Transverse colon (tissue), 4 donors: ENCODE measurements at regions of chr3 and their contacts with region 1.

Region 1: GRCh38 chr3:27484015-27484844 is at the start of gene SLC4A7:
- DNase-seq: peak; percentile 99
- H3K4me3 ChIP-seq: peak within 1 kb of the TSS; percentile 54 to 84 (median 76)
- H3K27ac ChIP-seq: peak within 1 kb of the TSS; percentile 91 to 97 (median 94)
- H3K4me1 ChIP-seq: peaks cover 0 to 40% (median 16%) of the 10 kb centered on the region in 4 donors
- H3K27me3 ChIP-seq: no peaks in the 10 kb centered on the region
- CTCF ChIP-seq: no peak
- EP300 ChIP-seq: no peak
- POLR2A ChIP-seq: peak; percentile 90
- total RNA-seq, gene SLC4A7: 22.7 to 45.6 (median 35.4) TPM

Region 2: DNA sequence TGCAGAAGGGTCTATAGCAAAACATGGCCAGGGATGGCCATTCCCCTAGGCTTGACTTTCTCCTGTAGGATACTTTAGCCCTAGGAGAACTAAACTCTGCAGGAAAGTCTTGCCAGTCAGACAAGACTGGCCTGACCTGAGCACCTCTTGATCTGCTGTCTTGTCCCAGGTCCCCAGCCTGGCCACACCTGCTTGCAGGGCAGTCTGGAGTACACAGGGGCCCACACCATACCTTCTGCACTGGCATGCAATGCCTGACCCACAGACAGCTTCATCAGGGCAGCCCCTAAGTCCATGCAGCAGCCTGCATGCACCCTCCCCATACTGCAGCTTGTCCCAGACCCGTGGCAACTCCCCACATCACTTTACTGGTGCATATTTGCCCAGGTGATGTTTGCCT is 657.1 kb before region 1 on chr3:
- in situ Hi-C with region 1: no loop called
- intact Hi-C with region 1: no loop called
- DNase-seq: no peak
- H3K4me3 ChIP-seq: no peak overlapping the region
- H3K27ac ChIP-seq: no peak overlapping the region
- H3K4me1 ChIP-seq: no peaks in the 10 kb centered on the region
- H3K27me3 ChIP-seq: no peaks in the 10 kb centered on the region
- CTCF ChIP-seq: no peak
- EP300 ChIP-seq: no peak
- POLR2A ChIP-seq: no peak

Region 3: GRCh38 chr3:27596334-27596841 is 112.2 kb after region 1 on chr3:
- in situ Hi-C with region 1: no loop called
- intact Hi-C with region 1: no loop called
- DNase-seq: no peak
- H3K4me3 ChIP-seq: no peak overlapping the region
- H3K27ac ChIP-seq: peak overlapping the region in 1 of 4 donors; percentile 21
- H3K4me1 ChIP-seq: peaks cover 0 to 21% (median 5%) of the 10 kb centered on the region in 4 donors
- H3K27me3 ChIP-seq: no peaks in the 10 kb centered on the region
- CTCF ChIP-seq: no peak
- EP300 ChIP-seq: no peak
- POLR2A ChIP-seq: no peak

Region 4: DNA sequence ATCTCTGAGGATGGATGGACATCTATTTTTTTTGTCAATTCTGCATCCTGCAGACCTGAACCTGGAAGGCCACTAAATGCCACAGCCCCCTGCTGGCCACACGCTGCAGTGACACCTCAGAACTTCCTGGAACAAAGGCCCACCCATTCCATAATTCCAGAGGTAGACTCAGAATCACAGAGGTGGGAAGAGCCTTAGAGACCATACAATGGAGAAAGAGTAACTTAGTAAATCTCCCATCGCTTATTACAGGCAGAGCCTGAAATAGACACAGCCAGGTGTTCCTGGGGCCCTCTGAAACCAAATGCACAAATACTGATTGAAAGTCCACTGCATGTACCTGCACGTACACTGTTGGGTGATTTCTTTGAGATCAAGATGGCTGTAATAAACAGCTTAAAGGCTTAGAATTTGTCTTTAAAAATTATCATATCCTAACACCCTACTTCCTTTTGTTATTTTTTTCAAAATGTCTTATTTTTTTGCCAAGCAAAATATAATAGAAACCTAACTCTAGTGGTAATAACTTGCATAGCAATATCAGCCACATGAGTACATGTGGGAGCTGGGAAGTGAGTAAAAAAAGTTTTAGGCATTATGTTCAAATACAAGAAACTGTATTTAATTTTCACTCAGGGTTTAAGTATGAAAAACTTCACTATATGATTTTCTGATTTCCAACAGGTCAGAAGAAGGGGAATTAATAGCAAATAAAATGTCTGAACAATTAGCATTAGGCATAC is 175.2 kb after region 1 on chr3:
- in situ Hi-C with region 1: loop called in 1 of 4 experiments (anchors 25 kb)
- intact Hi-C with region 1: no loop called
- DNase-seq: peak; percentile 60
- H3K4me3 ChIP-seq: no peak overlapping the region
- H3K27ac ChIP-seq: no peak overlapping the region
- H3K4me1 ChIP-seq: no peaks in the 10 kb centered on the region
- H3K27me3 ChIP-seq: no peaks in the 10 kb centered on the region
- CTCF ChIP-seq: peak; percentile 77 to 81 (median 80)
- EP300 ChIP-seq: no peak
- POLR2A ChIP-seq: no peak